Endothelial cell of umbilical vein (primary cell): ENCODE measurements at regions of chr3 and their contacts with region 1.

Region 1: DNA sequence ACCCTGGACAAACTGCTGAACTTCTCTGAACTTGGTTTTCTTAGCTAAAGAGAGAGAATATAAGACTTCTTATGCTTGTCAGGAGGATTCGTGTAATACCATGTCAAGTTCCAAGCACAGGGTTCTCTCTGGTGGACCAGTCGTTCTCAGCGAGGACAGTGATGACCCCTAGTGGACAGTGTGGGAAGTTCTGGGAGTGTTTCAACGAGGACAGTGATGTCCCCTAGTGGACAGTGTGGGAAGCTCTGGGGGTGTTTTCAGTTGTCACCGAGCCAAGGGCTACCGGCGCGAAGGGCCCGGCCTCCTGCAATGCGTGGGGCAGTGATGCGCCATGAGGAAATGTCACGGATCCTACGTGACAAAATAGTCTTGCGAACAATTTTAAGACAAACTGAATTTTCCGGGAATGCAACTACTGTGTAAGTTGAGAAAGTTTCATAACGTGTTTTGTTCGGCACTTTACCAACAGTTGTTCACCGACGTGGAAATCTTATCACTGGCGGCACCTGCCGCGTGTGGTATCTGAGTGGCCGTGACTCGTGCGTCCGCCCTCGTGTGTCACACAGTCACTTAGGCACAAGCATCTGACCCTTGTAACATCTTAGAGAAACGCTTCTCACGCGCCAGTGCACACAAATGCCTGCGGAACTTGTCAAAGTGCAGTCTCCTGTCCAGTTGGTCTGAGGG is 39.3 kb upstream of the MUC4 start:
- DNase-seq: peak; percentile 84
- H3K4me3 ChIP-seq: no peak overlapping the region
- H3K27ac ChIP-seq: no peak overlapping the region
- H3K4me1 ChIP-seq: no peaks in the 10 kb centered on the region
- H3K27me3 ChIP-seq: no peaks in the 10 kb centered on the region
- CTCF ChIP-seq: peak; percentile 100
- POLR2A ChIP-seq: no peak

Region 2: GRCh38 chr3:195271116-195271858 is 579.7 kb before region 1 on chr3 and contains the start of gene XXYLT1:
- CTCF ChIA-PET with region 1: interaction called, 10 read pairs
- POLR2A ChIA-PET with region 1: no interaction called
- dilution Hi-C with region 1: no loop called
- intact Hi-C with region 1: no loop called
- DNase-seq: peak; percentile 93
- H3K4me3 ChIP-seq: peak within 1 kb of the TSS; percentile 79 to 91 (median 79)
- H3K27ac ChIP-seq: peak within 1 kb of the TSS; percentile 68
- H3K4me1 ChIP-seq: peaks cover 23% of the 10 kb centered on the region
- H3K27me3 ChIP-seq: no peaks in the 10 kb centered on the region
- CTCF ChIP-seq: peak; percentile 94 to 98
- POLR2A ChIP-seq: peak; percentile 84
- total RNA-seq, gene XXYLT1: 58.6 and 78.1 TPM in 2 replicates

Region 3: GRCh38 chr3:195828762-195829161 is 22.2 kb before region 1 on chr3:
- CTCF ChIA-PET with region 1: interaction called, 13 read pairs
- POLR2A ChIA-PET with region 1: no interaction called
- dilution Hi-C with region 1: no loop called
- intact Hi-C with region 1: no loop called
- DNase-seq: no peak
- H3K4me3 ChIP-seq: no peak overlapping the region
- H3K27ac ChIP-seq: no peak overlapping the region
- H3K4me1 ChIP-seq: no peaks in the 10 kb centered on the region
- H3K27me3 ChIP-seq: no peaks in the 10 kb centered on the region
- CTCF ChIP-seq: no peak
- POLR2A ChIP-seq: no peak

Region 4: GRCh38 chr3:195863121-195864006 is 12.4 kb after region 1 on chr3:
- CTCF ChIA-PET with region 1: interaction called, 33 read pairs
- POLR2A ChIA-PET with region 1: no interaction called
- dilution Hi-C with region 1: no loop called
- intact Hi-C with region 1: no loop called
- DNase-seq: peak; percentile 81
- H3K4me3 ChIP-seq: no peak overlapping the region
- H3K27ac ChIP-seq: no peak overlapping the region
- H3K4me1 ChIP-seq: no peaks in the 10 kb centered on the region
- H3K27me3 ChIP-seq: no peaks in the 10 kb centered on the region
- CTCF ChIP-seq: peak; percentile 97
- POLR2A ChIP-seq: no peak

Region 5: DNA sequence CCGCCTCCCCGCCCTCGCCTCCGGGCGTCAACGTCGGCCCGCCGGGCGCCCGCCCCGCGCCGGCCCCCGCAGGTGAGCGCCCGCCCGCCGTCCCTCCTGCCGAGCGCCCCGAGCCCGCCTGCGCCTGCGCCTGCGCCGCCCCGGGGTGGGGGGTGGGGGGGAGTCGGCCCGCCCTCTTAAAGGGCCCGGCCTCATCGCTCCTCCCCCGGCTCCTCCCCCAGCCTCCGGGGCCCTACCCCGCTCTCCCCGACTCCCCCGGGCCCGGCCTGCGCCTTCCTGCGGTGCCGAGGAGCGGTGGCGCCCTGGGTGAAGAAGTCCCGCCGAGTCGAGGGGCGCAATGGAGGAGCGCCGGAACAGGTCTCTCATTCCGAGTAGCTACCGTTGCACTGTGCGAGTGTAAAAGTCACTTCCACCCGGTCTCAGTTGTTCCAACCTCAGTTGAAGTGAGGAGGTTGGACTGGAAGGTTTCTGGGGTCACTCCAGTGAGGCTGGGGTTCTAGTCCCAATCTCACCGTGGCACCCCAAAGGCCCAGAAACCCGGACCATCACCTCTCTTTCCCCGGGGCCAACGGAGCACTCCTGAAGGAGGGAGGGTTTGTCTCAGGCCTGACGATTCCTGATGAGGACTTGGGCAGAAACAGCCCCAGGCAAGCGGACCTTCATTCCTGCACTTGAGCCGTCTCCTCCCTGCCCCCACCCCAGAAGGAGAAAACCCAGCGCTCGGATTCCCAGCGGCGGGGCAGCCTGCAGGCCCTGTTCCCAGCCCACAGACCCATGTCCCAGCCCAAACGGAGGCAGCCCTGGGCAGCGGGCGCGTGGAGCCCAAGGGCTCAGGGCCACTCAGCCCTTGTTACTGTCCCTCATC is 58.9 kb after region 1 on chr3:
- CTCF ChIA-PET with region 1: interaction called, 101 read pairs
- POLR2A ChIA-PET with region 1: no interaction called
- dilution Hi-C with region 1: no loop called
- intact Hi-C with region 1: no loop called
- DNase-seq: peak; percentile 73
- H3K4me3 ChIP-seq: peak overlapping the region in 2 of 3 experiments; percentile 0 to 54
- H3K27ac ChIP-seq: no peak overlapping the region
- H3K4me1 ChIP-seq: no peaks in the 10 kb centered on the region
- H3K27me3 ChIP-seq: no peaks in the 10 kb centered on the region
- CTCF ChIP-seq: no peak
- POLR2A ChIP-seq: no peak